HepG2 (cell line): ENCODE measurements at regions of chr13 and their contacts with region 1.

Region 1: GRCh38 chr13:98260357-98261164 is 83.5 kb upstream of the RNF113B start:
- DNase-seq: no peak
- ATAC-seq: peak; percentile 39
- H3K4me3 ChIP-seq: no peak overlapping the region
- H3K27ac ChIP-seq: peak overlapping the region; percentile 4
- H3K4me1 ChIP-seq: peaks cover 93% of the 10 kb centered on the region
- H3K27me3 ChIP-seq: no peaks in the 10 kb centered on the region
- CTCF ChIP-seq: no peak
- EP300 ChIP-seq: no peak
- POLR2A ChIP-seq: no peak
- RAD21 ChIP-seq: no peak

Region 2: GRCh38 chr13:98246538-98247172 is 13.9 kb before region 1 on chr13:
- CTCF ChIA-PET with region 1: no interaction called
- POLR2A ChIA-PET with region 1: interaction called, 45 read pairs
- in situ Hi-C with region 1: no loop called
- intact Hi-C with region 1: no loop called
- DNase-seq: peak; percentile 96
- ATAC-seq: peak; percentile 92
- H3K4me3 ChIP-seq: no peak overlapping the region; a peak in 1 of 6 replicates
- H3K27ac ChIP-seq: peak overlapping the region; percentile 87
- H3K4me1 ChIP-seq: peaks cover 100% of the 10 kb centered on the region
- H3K27me3 ChIP-seq: no peaks in the 10 kb centered on the region
- CTCF ChIP-seq: no peak
- EP300 ChIP-seq: peak in 1 of 2 experiments; percentile 82; a peak in 2 of 4 replicates
- POLR2A ChIP-seq: no peak
- RAD21 ChIP-seq: no peak